Aorta (tissue), 5 donors: ENCODE measurements at regions of chr4 and their contacts with region 1.

Region 1: GRCh38 chr4:139633661-139634060 is 32.0 kb upstream of the MGST2 start:
- DNase-seq: peak in 1 of 2 donors; percentile 72
- ATAC-seq: peak; percentile 72
- H3K4me3 ChIP-seq: no peak overlapping the region
- H3K27ac ChIP-seq: no peak overlapping the region
- H3K4me1 ChIP-seq: no peaks in the 10 kb centered on the region
- H3K27me3 ChIP-seq: no peaks in the 10 kb centered on the region

Region 2: DNA sequence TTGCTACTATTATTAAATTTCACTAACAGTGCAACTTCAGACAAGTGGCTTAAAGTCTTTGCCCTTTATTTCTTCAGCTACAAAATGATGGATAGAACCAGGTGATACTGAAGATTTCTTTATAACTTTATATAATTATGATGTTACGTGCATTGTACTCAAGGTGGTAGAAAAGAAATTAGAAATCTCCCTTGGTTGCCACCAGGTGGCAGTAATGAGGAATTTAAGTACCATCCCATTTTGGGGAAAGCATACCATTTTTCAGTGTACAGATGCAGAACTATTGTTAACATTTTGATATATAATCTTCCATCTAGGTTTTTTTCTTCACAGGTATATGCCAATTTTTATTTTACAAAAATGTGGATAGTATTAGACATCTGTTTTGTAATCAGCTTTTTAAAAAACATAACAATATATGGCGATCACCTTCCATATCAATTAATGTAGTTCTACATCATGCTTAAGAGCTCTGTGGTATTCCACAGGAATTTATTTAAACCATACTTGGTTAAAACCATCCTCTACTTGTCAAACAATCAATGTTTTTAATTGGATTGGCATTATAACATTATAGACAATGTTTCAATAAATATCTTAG is 217.5 kb before region 1 on chr4:
- intact Hi-C with region 1: loop called in 1 of 2 experiments (anchors 10 kb)
- DNase-seq: no peak
- ATAC-seq: no peak
- H3K4me3 ChIP-seq: no peak overlapping the region
- H3K27ac ChIP-seq: no peak overlapping the region
- H3K4me1 ChIP-seq: no peaks in the 10 kb centered on the region
- H3K27me3 ChIP-seq: no peaks in the 10 kb centered on the region

Region 3: GRCh38 chr4:139493176-139493575 is 140.5 kb before region 1 on chr4:
- intact Hi-C with region 1: loop called (anchors 5 to 10 kb)
- DNase-seq: no peak
- ATAC-seq: no peak
- H3K4me3 ChIP-seq: no peak overlapping the region
- H3K27ac ChIP-seq: no peak overlapping the region
- H3K4me1 ChIP-seq: no peaks in the 10 kb centered on the region
- H3K27me3 ChIP-seq: no peaks in the 10 kb centered on the region

Region 4: GRCh38 chr4:139499026-139499585 is 134.6 kb before region 1 on chr4:
- intact Hi-C with region 1: loop called (anchors 5 to 10 kb)
- DNase-seq: no peak
- ATAC-seq: no peak
- H3K4me3 ChIP-seq: no peak overlapping the region
- H3K27ac ChIP-seq: no peak overlapping the region
- H3K4me1 ChIP-seq: no peaks in the 10 kb centered on the region
- H3K27me3 ChIP-seq: peaks cover 0 to 2% of the 10 kb centered on the region in 2 donors

Region 5: GRCh38 chr4:139593091-139593564 is 40.5 kb before region 1 on chr4:
- intact Hi-C with region 1: no loop called
- DNase-seq: no peak
- ATAC-seq: no peak
- H3K4me3 ChIP-seq: no peak overlapping the region
- H3K27ac ChIP-seq: no peak overlapping the region
- H3K4me1 ChIP-seq: no peaks in the 10 kb centered on the region
- H3K27me3 ChIP-seq: no peaks in the 10 kb centered on the region

Region 6: DNA sequence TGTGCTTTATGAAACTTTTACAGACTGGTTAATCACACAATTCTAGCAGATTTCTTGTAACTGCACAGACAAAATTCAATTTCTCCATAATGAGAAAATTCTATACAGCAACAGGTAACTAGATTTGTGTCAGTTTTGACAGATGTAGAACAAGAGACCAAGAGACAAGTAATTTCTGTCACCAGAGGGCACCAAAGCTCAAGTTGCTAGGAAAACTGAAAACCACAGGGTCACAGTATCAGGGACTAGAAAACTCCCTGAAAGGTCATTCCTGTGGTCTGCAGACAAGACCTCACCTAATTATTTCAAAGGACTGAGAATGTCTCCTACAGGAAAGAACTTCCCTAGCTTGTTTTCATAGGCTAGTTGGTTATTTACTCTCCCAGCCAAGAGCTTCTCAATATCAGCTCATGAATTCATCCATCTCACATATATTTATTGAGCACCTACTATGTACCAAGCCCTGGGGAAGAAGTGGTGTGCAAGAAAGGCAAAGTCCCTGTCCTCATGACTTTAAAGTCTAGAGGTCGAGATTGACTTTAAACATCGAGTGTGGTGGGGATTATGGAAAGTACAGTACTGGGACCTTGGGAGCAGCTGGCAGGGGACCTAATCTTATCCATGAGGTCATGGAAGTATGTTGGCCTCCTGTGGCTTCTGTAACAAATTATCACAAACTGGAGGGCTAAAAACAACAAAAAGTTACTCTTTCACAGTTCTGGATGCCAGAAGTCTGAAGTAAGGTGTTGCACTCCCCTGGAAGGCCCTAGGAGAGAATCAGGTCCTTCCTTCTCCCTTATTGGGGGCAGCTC is 29.9 kb before region 1 on chr4:
- intact Hi-C with region 1: loop called in 1 of 2 experiments (anchors 1 kb)
- DNase-seq: no peak
- ATAC-seq: no peak
- H3K4me3 ChIP-seq: no peak overlapping the region
- H3K27ac ChIP-seq: no peak overlapping the region
- H3K4me1 ChIP-seq: no peaks in the 10 kb centered on the region
- H3K27me3 ChIP-seq: no peaks in the 10 kb centered on the region